Head of caudate nucleus (tissue), 42 donors: ENCODE measurements at regions of chr17 and their contacts with region 1.

Region 1: DNA sequence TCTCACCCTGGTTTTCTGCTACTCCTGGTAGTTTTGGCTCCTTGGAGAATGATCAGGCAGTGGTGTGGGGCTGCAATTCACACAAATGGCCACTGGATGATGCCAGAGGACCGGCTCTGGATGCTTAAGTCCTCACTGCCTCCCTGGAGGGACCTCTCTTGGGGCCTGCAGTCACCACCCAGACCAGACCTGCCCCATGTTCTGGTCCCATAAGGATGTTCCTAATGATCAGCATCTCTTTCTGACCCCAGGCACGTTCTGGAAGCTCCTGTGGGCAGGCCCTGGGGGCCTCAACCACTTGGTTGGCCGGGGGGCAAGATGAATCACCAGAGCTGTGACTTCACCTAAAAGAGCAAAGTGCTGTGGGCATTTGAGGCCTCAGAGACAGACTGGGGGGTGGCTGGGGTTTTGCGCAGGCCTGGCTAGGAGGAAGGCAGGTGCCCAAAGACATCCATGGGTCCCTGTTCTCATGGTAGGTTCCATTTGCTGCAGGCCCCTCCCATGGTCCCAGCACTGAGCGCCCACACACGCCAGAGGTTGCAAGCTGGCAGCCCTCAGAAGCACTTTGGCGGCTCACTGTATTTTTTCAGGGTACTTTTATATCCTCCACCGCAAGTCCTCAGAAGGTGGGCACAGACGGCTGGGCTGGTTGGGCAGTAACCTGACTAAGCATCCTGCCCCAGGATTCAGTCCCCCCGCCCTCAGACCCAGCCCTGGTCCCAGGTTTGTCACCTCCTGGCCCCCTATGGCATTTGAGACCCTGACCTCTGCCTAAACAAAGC is 53.2 kb downstream of the NT5M start:
- DNase-seq: peak; percentile 70 to 94 (median 86)

Region 2: GRCh38 chr17:17387830-17388441 is 31.6 kb after region 1 on chr17:
- intact Hi-C with region 1: no loop called
- DNase-seq: no peak

Region 3: GRCh38 chr17:17568749-17569195 is 212.4 kb after region 1 on chr17:
- intact Hi-C with region 1: loop called (anchors 5 kb)
- DNase-seq: peak; percentile 49 to 90 (median 81)

Region 4: GRCh38 chr17:17641621-17642409 is 285.5 kb after region 1 on chr17:
- intact Hi-C with region 1: loop called (anchors 2 kb)
- DNase-seq: peak; percentile 47 to 95 (median 86)